ENCODE measurements at regions of chr2 and their contacts with region 1.

Region 1: DNA sequence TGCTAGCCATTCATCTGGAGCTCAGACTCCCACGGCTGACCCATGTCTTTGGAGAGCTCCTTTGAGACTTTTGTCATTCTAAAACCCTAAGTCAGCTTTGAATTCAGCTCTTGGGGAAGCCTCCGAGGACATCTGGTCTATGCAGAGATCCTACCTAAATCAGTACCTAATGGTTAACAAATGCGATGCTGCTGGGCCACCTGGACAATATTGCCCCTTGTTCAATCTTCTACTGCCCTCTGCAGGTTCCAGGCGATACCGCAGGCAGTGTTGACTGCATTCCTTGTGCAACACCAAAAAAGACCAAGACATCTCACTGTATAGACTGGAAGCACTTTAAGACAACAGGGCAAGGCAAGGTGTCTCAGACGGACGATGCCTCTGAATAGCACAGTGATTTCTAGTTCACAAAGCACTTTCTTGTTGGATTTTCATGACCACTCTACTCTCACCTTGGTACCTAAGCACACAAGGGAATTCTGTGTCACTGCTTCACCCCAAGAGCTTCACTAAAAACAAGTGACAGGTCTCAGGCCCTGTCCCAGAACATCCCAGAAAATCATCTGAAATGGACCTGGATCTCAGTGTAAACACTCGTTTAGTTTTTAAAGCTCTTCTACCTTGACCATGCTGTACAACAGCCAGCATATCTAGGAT is 80.9 kb downstream of the XDH start:
- DNase-seq: peak; percentile 62 to 74
- H3K4me3 ChIP-seq: no peak overlapping the region
- H3K27ac ChIP-seq: no peak overlapping the region
- H3K4me1 ChIP-seq: no peaks in the 10 kb centered on the region; the same call in 1 of the 2 replicates
- H3K27me3 ChIP-seq: no peaks in the 10 kb centered on the region
- CTCF ChIP-seq: peak; percentile 97

Region 2: DNA sequence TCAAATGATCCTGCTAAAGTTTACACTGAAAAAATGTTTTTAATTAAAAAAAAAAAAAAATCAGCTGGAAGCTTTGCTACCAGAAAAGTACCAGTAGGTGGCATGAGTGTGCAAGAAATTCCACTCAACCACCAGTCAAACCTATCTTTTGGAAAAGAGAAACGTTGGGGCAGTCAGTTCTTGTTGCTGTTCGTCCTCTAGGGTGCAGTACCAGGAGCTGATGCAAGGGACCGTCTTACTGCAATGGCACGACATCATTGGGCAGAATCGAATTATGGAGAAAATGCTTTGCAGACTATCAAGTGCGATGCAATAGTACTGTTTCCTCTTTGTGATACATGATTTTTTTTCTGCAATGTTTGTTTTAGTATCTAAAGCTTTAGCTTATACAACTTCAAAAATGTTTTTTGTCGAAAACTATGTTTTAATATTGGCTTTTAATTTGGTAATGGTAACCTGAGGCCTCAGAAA is 1168.6 kb before region 1 on chr2:
- CTCF ChIA-PET with region 1: no interaction called
- POLR2A ChIA-PET with region 1: no interaction called
- intact Hi-C with region 1: loop called (anchors 10 kb)
- DNase-seq: peak; percentile 54 to 84
- H3K4me3 ChIP-seq: no peak overlapping the region
- H3K27ac ChIP-seq: no peak overlapping the region
- H3K4me1 ChIP-seq: peaks cover 21% of the 10 kb centered on the region
- H3K27me3 ChIP-seq: peaks cover 2% of the 10 kb centered on the region; the same call in 1 of the 2 replicates
- CTCF ChIP-seq: peak; percentile 90

Region 3: DNA sequence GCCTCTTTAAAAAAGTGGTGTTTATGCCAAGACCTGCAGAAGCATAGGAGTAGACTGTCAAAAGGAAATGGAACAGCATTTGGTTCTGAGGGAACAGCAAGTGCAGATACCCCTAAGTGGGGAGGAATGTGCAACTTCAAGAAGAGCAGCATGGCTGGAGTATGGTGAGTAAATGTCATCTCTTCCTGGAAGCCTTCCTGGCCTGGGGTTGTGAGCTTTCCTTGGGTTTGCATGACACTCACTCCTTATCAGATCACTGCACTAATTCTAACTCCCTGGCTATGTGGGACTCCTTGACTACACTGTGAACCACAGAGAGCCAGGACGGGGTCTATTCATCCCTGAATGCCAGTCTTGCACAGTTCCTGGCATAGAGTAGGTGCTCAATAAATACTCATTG is 173.9 kb before region 1 on chr2:
- CTCF ChIA-PET with region 1: no interaction called
- POLR2A ChIA-PET with region 1: no interaction called
- intact Hi-C with region 1: no loop called
- DNase-seq: no peak
- H3K4me3 ChIP-seq: no peak overlapping the region
- H3K27ac ChIP-seq: no peak overlapping the region
- H3K4me1 ChIP-seq: peaks cover 9% of the 10 kb centered on the region
- H3K27me3 ChIP-seq: peaks cover 33% of the 10 kb centered on the region
- CTCF ChIP-seq: no peak

Region 4: DNA sequence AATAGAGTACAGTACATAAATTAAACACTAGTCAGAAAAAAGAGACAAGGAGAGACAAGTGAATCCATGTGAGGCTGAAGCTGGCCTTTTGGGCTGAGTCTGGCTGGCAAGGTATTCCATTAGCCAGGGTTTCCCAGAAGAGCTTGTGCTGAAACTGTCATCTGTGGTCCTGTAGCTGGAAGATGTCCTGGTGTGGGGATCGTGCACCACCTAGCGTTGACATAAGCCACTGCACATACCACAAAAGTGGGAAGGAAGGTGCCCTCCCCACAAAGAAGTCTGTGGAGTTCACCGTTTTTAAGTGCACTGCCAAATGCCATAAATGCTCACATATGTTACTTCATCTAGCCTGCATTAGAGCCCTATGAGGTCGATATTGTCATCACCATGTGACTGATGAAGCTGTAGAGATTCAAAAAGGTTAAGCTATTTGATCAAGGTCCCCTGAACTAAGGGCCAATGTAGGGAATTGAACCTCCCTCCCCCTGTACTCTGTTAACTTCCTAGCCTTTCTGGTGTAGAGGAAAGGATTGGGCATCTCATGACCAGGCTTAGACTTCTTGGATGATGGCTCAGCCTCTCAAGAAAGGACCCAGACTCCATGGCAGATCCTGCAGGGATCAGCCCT is 163.5 kb before region 1 on chr2:
- CTCF ChIA-PET with region 1: no interaction called
- POLR2A ChIA-PET with region 1: no interaction called
- intact Hi-C with region 1: loop called (anchors 1 kb)
- DNase-seq: peak; percentile 42 to 53
- H3K4me3 ChIP-seq: no peak overlapping the region
- H3K27ac ChIP-seq: no peak overlapping the region
- H3K4me1 ChIP-seq: no peaks in the 10 kb centered on the region
- H3K27me3 ChIP-seq: no peaks in the 10 kb centered on the region
- CTCF ChIP-seq: peak; percentile 99

Region 5: DNA sequence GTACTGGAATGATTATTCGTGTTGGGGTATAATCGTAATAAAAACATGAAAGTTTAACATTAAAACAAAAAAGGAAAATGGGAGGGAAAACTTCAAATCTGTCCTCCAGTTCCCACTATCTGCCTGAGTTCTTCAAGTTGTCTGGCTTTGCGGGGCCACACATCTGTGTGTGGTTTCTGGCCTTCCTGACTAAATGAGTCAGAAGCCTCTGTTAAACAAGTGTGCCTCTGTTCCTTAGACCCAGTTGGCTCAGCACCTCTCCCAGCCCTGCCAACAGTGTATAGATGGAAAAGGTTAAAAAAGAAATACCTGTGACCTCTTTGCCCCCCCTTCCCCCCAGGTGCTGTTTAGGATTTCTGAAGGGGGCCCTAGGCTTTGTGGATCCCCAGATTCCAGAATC is 50.7 kb after region 1 on chr2:
- CTCF ChIA-PET with region 1: interaction called, 11 read pairs
- POLR2A ChIA-PET with region 1: no interaction called
- intact Hi-C with region 1: loop called (anchors 5 kb)
- DNase-seq: peak in 1 of 2 experiments; percentile 92
- H3K4me3 ChIP-seq: peak overlapping the region; percentile 22; the same call in 1 of the 2 replicates
- H3K27ac ChIP-seq: peak overlapping the region; percentile 98
- H3K4me1 ChIP-seq: peaks cover 46% of the 10 kb centered on the region
- H3K27me3 ChIP-seq: no peaks in the 10 kb centered on the region
- CTCF ChIP-seq: no peak

Region 6: GRCh38 chr2:31523871-31524492 is 190.3 kb after region 1 on chr2:
- CTCF ChIA-PET with region 1: no interaction called
- POLR2A ChIA-PET with region 1: no interaction called
- intact Hi-C with region 1: loop called (anchors 5 kb)
- DNase-seq: peak; percentile 42 to 45
- H3K4me3 ChIP-seq: no peak overlapping the region
- H3K27ac ChIP-seq: no peak overlapping the region
- H3K4me1 ChIP-seq: no peaks in the 10 kb centered on the region
- H3K27me3 ChIP-seq: no peaks in the 10 kb centered on the region
- CTCF ChIP-seq: peak; percentile 96

Measured in PC-9 (cell line).